Activated CD4-positive, alpha-beta T cell treated with anti-CD3 and anti-CD28 coated beads for 36 hours (primary cell): ENCODE measurements at regions of chr21 and their contacts with region 1.

Region 1: DNA sequence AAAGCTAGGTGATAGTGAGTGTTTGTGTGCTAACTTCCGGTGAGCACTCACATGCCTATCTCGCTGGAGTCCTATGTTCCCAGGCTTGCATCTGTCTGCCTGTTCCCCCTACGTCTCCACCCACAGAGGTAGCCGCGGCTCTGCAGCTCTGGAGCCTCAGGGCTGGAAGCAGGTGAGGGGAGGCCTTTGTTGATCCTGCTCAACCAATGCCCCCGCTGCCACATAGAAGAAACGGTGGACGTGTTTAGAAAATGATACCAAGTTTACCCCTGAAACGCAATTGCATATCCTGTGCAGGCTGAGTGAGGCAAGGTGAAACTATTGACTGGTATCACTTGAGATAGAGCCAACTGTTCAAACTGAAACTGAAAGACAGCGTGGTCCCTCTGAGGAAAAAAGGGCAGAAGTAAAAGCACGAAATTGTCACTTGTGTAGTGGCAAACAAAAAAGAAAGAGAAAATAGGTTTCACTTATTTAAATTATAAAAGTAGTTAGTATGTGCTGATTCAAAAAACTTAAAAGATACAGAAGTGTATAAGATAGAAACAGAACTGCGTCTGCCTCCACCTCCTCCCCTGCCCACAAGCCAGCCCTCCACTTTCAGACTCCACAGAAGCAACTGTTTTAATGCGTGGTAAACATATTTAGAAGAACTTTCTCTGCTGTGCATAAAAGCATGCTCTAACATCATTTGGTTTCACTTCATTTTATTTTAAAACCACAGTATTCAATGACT is 38.6 kb upstream of the ETS2 start:
- DNase-seq: peak; percentile 83
- ATAC-seq: peak; percentile 78
- H3K4me3 Mint-ChIP-seq: peak overlapping the region; percentile 46
- H3K27ac Mint-ChIP-seq: peak overlapping the region; percentile 97
- H3K4me1 Mint-ChIP-seq: peaks cover 56% of the 10 kb centered on the region
- H3K27me3 Mint-ChIP-seq: peaks cover 2% of the 10 kb centered on the region

Region 2: DNA sequence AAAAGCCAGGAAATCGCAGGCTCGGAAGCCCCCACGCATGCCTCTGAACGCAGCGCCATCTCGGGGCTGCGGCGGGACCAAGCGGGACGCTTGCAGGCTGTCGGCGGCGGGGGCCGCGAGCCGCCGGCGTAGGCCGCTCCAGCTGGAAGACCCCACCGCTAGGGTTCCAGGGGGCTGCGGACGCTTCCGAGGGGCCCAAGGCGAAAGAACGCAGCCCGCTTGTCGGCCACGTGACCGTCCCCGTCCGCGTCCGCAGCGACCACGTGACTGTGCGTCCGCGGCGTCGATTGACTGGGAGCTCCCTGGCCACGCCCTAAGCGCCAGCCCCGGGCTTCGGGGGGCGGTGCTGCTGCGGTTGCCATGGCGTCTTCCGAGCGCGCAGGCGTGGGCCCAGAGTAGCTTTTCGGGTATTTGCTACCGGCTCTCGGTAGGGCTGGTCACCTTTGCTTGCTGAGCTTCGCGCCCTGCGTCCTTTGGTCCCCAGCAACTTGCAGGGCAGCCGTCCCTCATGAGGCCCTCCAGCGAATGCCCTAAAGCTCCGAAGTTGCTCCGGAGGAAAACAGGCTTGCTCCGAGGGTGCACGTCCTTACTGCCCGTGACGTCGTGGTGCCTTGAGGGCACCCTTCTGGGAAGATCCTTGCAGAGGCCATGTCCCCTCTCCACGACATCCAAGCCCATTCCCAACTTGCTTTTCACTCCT is 1203.4 kb before region 1 on chr21:
- CTCF ChIA-PET with region 1: no interaction called
- POLR2A ChIA-PET with region 1: no interaction called
- intact Hi-C with region 1: loop called in 1 of 2 experiments (anchors 5 kb)
- DNase-seq: peak; percentile 96
- ATAC-seq: peak; percentile 79
- H3K4me3 Mint-ChIP-seq: peak overlapping the region; percentile 88
- H3K27ac Mint-ChIP-seq: peak overlapping the region; percentile 100
- H3K4me1 Mint-ChIP-seq: peaks cover 23% of the 10 kb centered on the region
- H3K27me3 Mint-ChIP-seq: no peaks in the 10 kb centered on the region

Region 3: GRCh38 chr21:38544661-38545060 is 222.5 kb before region 1 on chr21:
- CTCF ChIA-PET with region 1: no interaction called
- POLR2A ChIA-PET with region 1: no interaction called
- intact Hi-C with region 1: no loop called
- DNase-seq: no peak
- ATAC-seq: no peak
- H3K4me3 Mint-ChIP-seq: no peak overlapping the region
- H3K27ac Mint-ChIP-seq: no peak overlapping the region
- H3K4me1 Mint-ChIP-seq: no peaks in the 10 kb centered on the region
- H3K27me3 Mint-ChIP-seq: peaks cover 2% of the 10 kb centered on the region

Region 4: GRCh38 chr21:38733973-38734546 is 33.1 kb before region 1 on chr21:
- CTCF ChIA-PET with region 1: interaction called, 7 read pairs
- POLR2A ChIA-PET with region 1: no interaction called
- intact Hi-C with region 1: loop called in 1 of 2 experiments (anchors 1 kb)
- DNase-seq: peak; percentile 84
- ATAC-seq: peak; percentile 60
- H3K4me3 Mint-ChIP-seq: peak overlapping the region; percentile 74
- H3K27ac Mint-ChIP-seq: peak overlapping the region; percentile 67
- H3K4me1 Mint-ChIP-seq: peaks cover 11% of the 10 kb centered on the region
- H3K27me3 Mint-ChIP-seq: peaks cover 17% of the 10 kb centered on the region

Region 5: GRCh38 chr21:38805328-38806152 is 38.4 kb after region 1 on chr21 and contains the start of gene ETS2:
- CTCF ChIA-PET with region 1: interaction called, 14 read pairs
- POLR2A ChIA-PET with region 1: interaction called, 17 read pairs
- intact Hi-C with region 1: loop called (anchors 1 kb)
- DNase-seq: peak; percentile 89
- ATAC-seq: peak; percentile 74
- H3K4me3 Mint-ChIP-seq: peak within 1 kb of the TSS; percentile 86
- H3K27ac Mint-ChIP-seq: peak within 1 kb of the TSS; percentile 96
- H3K4me1 Mint-ChIP-seq: peaks cover 49% of the 10 kb centered on the region
- H3K27me3 Mint-ChIP-seq: no peaks in the 10 kb centered on the region
- total RNA-seq, gene ETS2: 44.7 to 61.9 TPM

Region 6: GRCh38 chr21:38913120-38913892 is 146.2 kb after region 1 on chr21:
- CTCF ChIA-PET with region 1: no interaction called
- POLR2A ChIA-PET with region 1: no interaction called
- intact Hi-C with region 1: loop called in 1 of 2 experiments (anchors 2 kb)
- DNase-seq: peak; percentile 61
- ATAC-seq: no peak
- H3K4me3 Mint-ChIP-seq: no peak overlapping the region
- H3K27ac Mint-ChIP-seq: no peak overlapping the region
- H3K4me1 Mint-ChIP-seq: peaks cover 18% of the 10 kb centered on the region
- H3K27me3 Mint-ChIP-seq: peaks cover 15% of the 10 kb centered on the region

Region 7: DNA sequence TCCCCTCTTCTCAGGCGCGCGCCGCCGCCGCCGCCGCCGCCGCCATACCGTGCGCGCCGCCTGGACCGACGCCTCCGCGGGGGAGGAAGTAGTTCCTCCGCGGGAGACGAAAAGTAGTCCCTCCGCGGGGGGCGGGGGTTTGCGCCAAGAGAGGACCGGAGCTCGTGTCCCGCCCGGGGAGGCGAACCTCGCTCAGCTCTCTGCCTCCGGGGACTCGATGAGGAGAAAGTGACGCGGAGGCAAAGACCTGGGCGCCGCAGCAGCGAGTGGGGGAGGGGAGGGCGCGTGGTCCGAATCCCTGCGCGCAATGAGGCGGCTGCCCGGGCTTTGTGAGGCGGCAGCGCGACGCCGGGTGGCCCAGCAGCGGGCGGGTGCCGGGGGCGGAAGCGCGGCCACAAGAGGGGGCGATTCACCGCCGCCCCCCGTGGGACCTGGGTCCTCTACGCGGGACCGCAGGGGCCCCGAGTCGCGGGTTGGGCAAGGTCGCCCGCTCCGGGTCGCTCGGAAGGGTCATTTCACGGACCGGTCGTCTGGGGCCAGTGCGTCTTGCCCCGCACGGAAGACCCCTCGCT is 546.5 kb after region 1 on chr21 and contains the start of gene BRWD1:
- CTCF ChIA-PET with region 1: no interaction called
- POLR2A ChIA-PET with region 1: no interaction called
- intact Hi-C with region 1: loop called (anchors 2 to 5 kb)
- DNase-seq: peak; percentile 85
- ATAC-seq: peak; percentile 42
- H3K4me3 Mint-ChIP-seq: peak within 1 kb of the TSS; percentile 92
- H3K27ac Mint-ChIP-seq: peak within 1 kb of the TSS; percentile 96
- H3K4me1 Mint-ChIP-seq: peaks cover 39% of the 10 kb centered on the region
- H3K27me3 Mint-ChIP-seq: no peaks in the 10 kb centered on the region
- total RNA-seq, gene BRWD1: 19.1 to 24.5 TPM